ENCODE measurements at regions of chr12 and their contacts with region 1.

Region 1: DNA sequence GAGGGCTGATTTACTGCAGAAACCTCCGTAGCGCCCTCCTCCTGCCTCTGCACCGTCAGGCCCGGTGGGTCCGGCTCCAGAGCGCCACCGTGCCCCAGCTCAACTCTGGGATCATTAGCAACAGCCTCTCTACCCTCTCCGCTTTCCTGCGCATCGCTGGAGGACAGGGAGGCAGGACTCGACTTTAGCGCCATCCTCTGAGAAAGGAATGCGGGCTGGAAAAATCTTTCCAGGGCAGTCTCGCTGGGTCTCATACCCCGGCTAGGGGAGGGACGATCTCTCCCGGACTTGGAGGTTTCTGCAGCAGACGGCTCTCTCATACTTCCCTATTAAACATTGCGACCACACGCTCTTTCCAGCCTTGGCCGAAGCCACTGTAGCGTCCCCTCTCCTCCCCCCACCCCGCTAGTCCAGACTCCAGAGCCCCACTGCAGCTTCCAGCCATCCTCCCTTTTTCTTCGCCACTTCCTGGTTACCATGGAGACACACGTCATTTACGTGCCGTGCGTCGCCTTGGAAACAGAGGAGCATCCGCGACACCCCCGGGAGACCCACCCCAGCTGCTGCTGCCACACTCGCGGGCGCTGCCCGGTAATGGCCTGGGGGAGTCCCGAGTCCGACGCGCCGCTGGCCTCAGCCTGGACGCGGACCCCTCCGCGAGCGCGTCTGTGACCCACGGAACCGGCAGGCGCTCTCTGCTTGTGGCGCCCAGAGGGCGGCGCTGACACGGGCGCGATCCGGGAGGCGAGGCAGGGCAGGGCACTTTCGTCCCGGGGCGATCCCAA is at the start of gene CCDC184:
- DNase-seq: peak; percentile 58 to 89 (median 86)
- H3K4me3 ChIP-seq: peak within 1 kb of the TSS; percentile 60 to 99 (median 83)
- H3K27ac ChIP-seq: peak within 1 kb of the TSS in 56 of 59 donors; percentile 33 to 88 (median 79)
- H3K27me3 ChIP-seq: peaks cover 0 to 5% (median 0%) of the 10 kb centered on the region in 45 donors
- CTCF ChIP-seq: peak in 48 of 56 donors; percentile 6 to 62 (median 34)
- total RNA-seq, gene CCDC184: 7.1 to 60.5 (median 30.1) TPM

Region 2: DNA sequence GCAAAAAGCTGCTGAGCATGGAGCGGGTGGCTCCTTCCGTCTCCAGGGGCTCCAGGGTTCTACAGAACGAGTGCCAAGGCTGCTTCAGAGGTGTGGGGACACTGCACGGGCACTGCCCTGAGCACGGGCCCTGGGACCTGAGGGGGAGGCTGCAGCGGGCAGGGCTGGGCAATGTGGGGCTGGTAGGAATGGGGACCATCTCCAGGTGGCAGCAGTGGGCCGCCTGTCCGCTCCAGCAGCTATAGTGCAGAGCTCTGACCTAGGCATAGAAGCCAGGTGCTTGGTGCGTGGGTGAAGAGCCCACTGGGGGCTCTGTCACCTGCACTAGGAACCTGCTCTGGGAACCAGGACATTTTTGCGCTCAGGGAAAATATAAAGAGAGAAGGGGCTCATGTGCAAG is 385.8 kb before region 1 on chr12:
- intact Hi-C with region 1: loop called in 1 of 2 experiments (anchors 10 kb)
- DNase-seq: peak in 4 of 10 donors; percentile 52 to 75 (median 58)
- H3K4me3 ChIP-seq: no peak overlapping the region
- H3K27ac ChIP-seq: peak overlapping the region in 4 of 59 donors; percentile 4 to 56 (median 16)
- H3K27me3 ChIP-seq: no peaks in the 10 kb centered on the region
- CTCF ChIP-seq: peak in 54 of 56 donors; percentile 36 to 74 (median 60)

Region 3: DNA sequence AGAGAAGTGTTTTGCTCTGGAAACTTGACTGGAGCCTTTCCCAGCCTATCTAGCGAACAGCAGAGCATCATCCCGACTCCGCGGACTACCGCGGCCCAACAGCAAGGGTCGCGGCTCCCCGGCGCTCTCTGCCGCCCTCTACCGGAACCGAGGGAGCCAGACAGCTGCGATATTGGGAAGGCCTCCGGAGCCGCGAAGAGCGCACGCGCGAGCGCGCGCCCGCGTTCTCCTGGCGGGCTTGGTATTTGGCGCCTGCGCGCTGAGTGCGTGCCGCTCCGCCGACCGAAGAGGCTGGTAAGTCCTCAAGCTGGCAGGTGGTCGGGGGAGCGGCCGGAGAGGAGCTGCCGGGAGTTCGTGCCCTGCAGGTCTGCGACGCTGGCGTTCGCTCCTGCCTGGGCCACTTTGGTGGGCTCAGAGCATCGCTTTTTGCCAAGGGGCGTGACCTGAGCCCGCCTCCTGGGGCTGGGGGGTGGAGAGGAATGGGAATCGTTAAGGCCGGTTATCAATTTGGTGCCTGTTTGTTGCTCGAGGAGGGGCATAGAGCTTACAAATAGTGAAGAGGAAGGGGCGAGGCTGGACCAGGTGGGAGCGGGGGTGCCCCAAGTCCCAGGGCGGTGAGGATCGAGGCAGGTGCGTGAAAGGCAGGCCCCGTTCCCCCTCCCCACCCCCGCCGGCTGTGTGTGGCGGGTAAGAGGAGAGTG is 219.8 kb before region 1 on chr12 and contains the start of gene TMEM106C:
- intact Hi-C with region 1: loop called in 1 of 2 experiments (anchors 10 kb)
- DNase-seq: peak; percentile 75 to 91 (median 86)
- H3K4me3 ChIP-seq: peak within 1 kb of the TSS; percentile 48 to 98 (median 85)
- H3K27ac ChIP-seq: peak within 1 kb of the TSS in 13 of 59 donors; percentile 6 to 83 (median 39)
- H3K27me3 ChIP-seq: peaks cover 0 to 19% (median 0%) of the 10 kb centered on the region in 45 donors
- CTCF ChIP-seq: peak; percentile 84 to 99 (median 96)
- total RNA-seq, gene TMEM106C: 21.4 to 75.3 (median 46.1) TPM

Region 4: GRCh38 chr12:48157018-48157888 is 26.0 kb before region 1 on chr12 and contains the start of gene ASB8:
- intact Hi-C with region 1: loop called in 1 of 2 experiments (anchors 2 kb)
- DNase-seq: peak; percentile 97 to 100 (median 98)
- H3K4me3 ChIP-seq: peak within 1 kb of the TSS; percentile 60 to 99 (median 90)
- H3K27ac ChIP-seq: peak within 1 kb of the TSS; percentile 71 to 97 (median 90)
- H3K27me3 ChIP-seq: peaks cover 0 to 5% (median 0%) of the 10 kb centered on the region in 45 donors
- CTCF ChIP-seq: peak; percentile 36 to 80 (median 67)
- total RNA-seq, gene ASB8: 36.8 to 80.8 (median 58.2) TPM

Region 5: GRCh38 chr12:48350249-48351021 is 167.2 kb after region 1 on chr12 and contains the start of gene ZNF641:
- intact Hi-C with region 1: loop called in 1 of 2 experiments (anchors 10 kb)
- DNase-seq: peak; percentile 45 to 87 (median 70)
- H3K4me3 ChIP-seq: peak within 1 kb of the TSS; percentile 47 to 96 (median 85)
- H3K27ac ChIP-seq: peak within 1 kb of the TSS; percentile 83 to 99 (median 97)
- H3K27me3 ChIP-seq: no peaks in the 10 kb centered on the region
- CTCF ChIP-seq: peak in 5 of 56 donors; percentile 12 to 40 (median 18)
- total RNA-seq, gene ZNF641: 14.7 to 40.6 (median 27.1) TPM

Region 6: DNA sequence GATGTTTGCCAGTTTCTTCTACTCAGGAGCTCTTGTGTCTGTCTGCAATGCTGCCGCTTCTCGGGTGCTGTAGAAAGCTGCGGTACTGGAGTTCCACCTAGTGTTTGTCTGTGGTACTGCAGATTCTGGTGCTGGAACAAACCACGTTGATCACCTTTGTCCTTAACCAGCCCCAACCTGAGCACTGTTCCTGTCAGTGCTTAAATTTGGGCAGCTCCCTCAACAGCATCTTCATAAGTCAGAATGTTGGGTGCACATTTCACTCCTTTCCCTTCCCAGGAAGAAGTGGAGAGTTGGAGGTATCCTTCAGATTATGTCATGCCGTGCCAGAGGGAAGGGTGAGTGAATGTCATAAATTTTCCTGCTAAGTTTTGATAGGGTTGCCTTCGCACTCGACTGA is 435.3 kb after region 1 on chr12:
- intact Hi-C with region 1: loop called in 1 of 2 experiments (anchors 5 kb)
- DNase-seq: peak; percentile 41 to 80 (median 73)
- H3K4me3 ChIP-seq: no peak overlapping the region
- H3K27ac ChIP-seq: no peak overlapping the region
- H3K27me3 ChIP-seq: peaks cover 0 to 10% (median 0%) of the 10 kb centered on the region in 45 donors
- CTCF ChIP-seq: peak in 55 of 56 donors; percentile 86 to 100 (median 98)

Measured in dorsolateral prefrontal cortex (tissue), 120 donors.